ENCODE measurements at regions of chr13 and their contacts with region 1.

Region 1: DNA sequence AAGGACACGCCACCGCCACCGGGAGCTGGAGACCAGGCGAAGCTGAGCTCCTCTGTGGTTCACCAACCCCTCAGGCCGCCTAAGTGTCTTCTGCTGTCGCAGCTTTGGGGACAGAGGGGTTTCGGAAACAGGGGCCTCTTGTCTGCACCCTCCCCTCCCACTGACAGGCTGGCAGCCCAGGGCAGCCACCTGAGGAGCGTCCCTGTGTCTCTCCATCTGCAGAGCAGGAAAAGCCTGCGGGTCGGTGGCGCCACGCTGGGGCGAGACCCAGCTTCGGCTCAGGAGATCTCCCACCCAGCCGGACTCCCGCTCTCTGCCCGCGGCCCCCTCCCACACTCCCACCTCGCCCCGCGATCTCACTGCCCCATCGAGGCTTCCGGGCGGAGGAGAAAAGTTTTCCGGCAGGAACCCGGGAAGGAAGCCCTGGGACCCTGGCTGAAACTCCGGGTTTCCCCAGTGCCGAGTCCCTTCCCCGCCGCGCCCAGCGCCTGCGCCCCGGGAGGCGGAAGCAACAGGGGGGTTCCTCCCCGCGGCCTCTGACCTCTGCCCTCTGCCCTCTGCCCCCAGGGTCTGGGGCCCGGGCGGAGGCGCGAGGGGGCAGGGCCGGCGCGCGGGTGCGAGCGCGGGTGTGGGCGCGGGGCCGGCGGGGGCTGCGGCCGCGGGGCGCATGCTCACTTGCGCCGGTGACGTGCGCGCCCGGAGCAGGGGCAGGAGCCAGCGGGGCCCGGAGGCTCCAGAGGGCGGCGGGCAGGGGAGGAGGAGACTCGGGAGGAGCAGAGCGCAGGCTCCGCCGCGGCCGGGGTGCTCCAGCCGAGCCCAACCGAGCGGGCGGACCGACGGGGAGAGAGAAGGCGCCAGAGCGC is at the start of gene ATP11A:
- DNase-seq: peak; percentile 75
- ATAC-seq: peak; percentile 90
- H3K4me3 ChIP-seq: peak within 1 kb of the TSS; percentile 85
- H3K27ac ChIP-seq: no peak within 1 kb of the TSS
- H3K4me1 ChIP-seq: no peaks in the 10 kb centered on the region; the same call in none of the 2 replicates
- H3K27me3 ChIP-seq: no peaks in the 10 kb centered on the region
- CTCF ChIP-seq: no peak
- total RNA-seq, gene ATP11A: 8.7 and 12.0 TPM in 2 replicates

Region 2: GRCh38 chr13:112587212-112587763 is 102.2 kb before region 1 on chr13:
- CTCF ChIA-PET with region 1: no interaction called
- POLR2A ChIA-PET with region 1: no interaction called
- intact Hi-C with region 1: no loop called
- DNase-seq: peak; percentile 74
- ATAC-seq: peak; percentile 87
- H3K4me3 ChIP-seq: peak overlapping the region; percentile 91
- H3K27ac ChIP-seq: peak overlapping the region; percentile 96
- H3K4me1 ChIP-seq: peaks cover 18% of the 10 kb centered on the region
- H3K27me3 ChIP-seq: no peaks in the 10 kb centered on the region
- CTCF ChIP-seq: 0 out of 2 replicates have a peak, but pooled peaks have one; percentile 14

Region 3: DNA sequence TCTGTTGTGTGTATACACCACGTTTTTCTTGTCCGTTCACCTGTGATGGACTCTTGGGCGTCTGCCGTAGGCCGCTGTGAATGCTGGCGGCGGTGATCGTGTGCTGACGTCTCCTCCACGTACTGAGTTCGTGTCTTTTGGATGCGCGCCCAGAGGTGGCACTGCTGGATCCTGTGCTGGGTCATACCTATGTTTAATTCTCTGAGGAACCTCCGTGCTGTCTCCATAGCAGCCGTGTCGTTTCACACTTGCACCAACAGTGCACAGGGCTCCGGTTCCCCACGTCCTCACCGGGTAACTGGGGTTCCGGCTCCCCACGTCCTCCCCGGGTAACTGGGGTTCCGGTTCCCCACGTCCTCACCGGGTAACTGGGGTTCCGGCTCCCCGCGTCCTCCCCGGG is 56.5 kb after region 1 on chr13:
- CTCF ChIA-PET with region 1: interaction called, 12 read pairs
- POLR2A ChIA-PET with region 1: no interaction called
- intact Hi-C with region 1: no loop called
- DNase-seq: no peak
- ATAC-seq: no peak
- H3K4me3 ChIP-seq: no peak overlapping the region
- H3K27ac ChIP-seq: no peak overlapping the region
- H3K4me1 ChIP-seq: no peaks in the 10 kb centered on the region
- H3K27me3 ChIP-seq: no peaks in the 10 kb centered on the region
- CTCF ChIP-seq: no peak

Region 4: GRCh38 chr13:112760506-112760905 is 71.0 kb after region 1 on chr13:
- CTCF ChIA-PET with region 1: no interaction called
- POLR2A ChIA-PET with region 1: no interaction called
- intact Hi-C with region 1: loop called (anchors 2 kb)
- DNase-seq: peak; percentile 58
- ATAC-seq: peak; percentile 84
- H3K4me3 ChIP-seq: no peak overlapping the region
- H3K27ac ChIP-seq: no peak overlapping the region
- H3K4me1 ChIP-seq: peaks cover 12% of the 10 kb centered on the region
- H3K27me3 ChIP-seq: no peaks in the 10 kb centered on the region
- CTCF ChIP-seq: no peak

Region 5: GRCh38 chr13:112885782-112886268 is 196.3 kb after region 1 on chr13:
- CTCF ChIA-PET with region 1: no interaction called
- POLR2A ChIA-PET with region 1: no interaction called
- intact Hi-C with region 1: loop called (anchors 10 kb)
- DNase-seq: peak; percentile 83
- ATAC-seq: peak; percentile 100
- H3K4me3 ChIP-seq: peak overlapping the region; percentile 56; the same call in 1 of the 2 replicates
- H3K27ac ChIP-seq: no peak overlapping the region
- H3K4me1 ChIP-seq: peaks cover 6% of the 10 kb centered on the region
- H3K27me3 ChIP-seq: no peaks in the 10 kb centered on the region
- CTCF ChIP-seq: no peak

Region 6: GRCh38 chr13:112959206-112959605 is 269.7 kb after region 1 on chr13:
- CTCF ChIA-PET with region 1: no interaction called
- POLR2A ChIA-PET with region 1: no interaction called
- intact Hi-C with region 1: no loop called
- DNase-seq: no peak
- ATAC-seq: no peak
- H3K4me3 ChIP-seq: no peak overlapping the region
- H3K27ac ChIP-seq: no peak overlapping the region
- H3K4me1 ChIP-seq: peaks cover 14% of the 10 kb centered on the region
- H3K27me3 ChIP-seq: no peaks in the 10 kb centered on the region
- CTCF ChIP-seq: no peak

Measured in PC-3 (cell line).